GM12878 (cell line): ENCODE measurements at regions of chr9 and their contacts with region 1.

Region 1: GRCh38 chr9:19493174-19493811 is 84.5 kb downstream of the ACER2 start:
- DNase-seq: peak; percentile 11
- ATAC-seq: peak; percentile 87
- H3K4me3 ChIP-seq: no peak overlapping the region
- H3K27ac ChIP-seq: no peak overlapping the region
- H3K4me1 ChIP-seq: no peaks in the 10 kb centered on the region
- H3K27me3 ChIP-seq: no peaks in the 10 kb centered on the region; a peak in 2 of 4 replicates
- CTCF ChIP-seq: peak; percentile 74 to 85 (median 81)
- EP300 ChIP-seq: no peak
- POLR2A ChIP-seq: no peak
- RAD21 ChIP-seq: peak; percentile 74

Region 2: GRCh38 chr9:19642256-19642655 is 149.0 kb after region 1 on chr9:
- CTCF ChIA-PET with region 1: no interaction called
- POLR2A ChIA-PET with region 1: no interaction called
- RAD21 ChIA-PET with region 1: no interaction called
- SMC1A ChIA-PET with region 1: interaction called, 4 read pairs
- in situ Hi-C with region 1: no loop called
- intact Hi-C with region 1: loop called (anchors 1 kb)
- DNase-seq: no peak
- ATAC-seq: peak; percentile 43; the same call in 2 of the 3 replicates
- H3K4me3 ChIP-seq: no peak overlapping the region
- H3K27ac ChIP-seq: no peak overlapping the region
- H3K4me1 ChIP-seq: no peaks in the 10 kb centered on the region
- H3K27me3 ChIP-seq: no peaks in the 10 kb centered on the region
- CTCF ChIP-seq: no peak
- EP300 ChIP-seq: no peak
- POLR2A ChIP-seq: no peak
- RAD21 ChIP-seq: no peak

Region 3: GRCh38 chr9:19748278-19749126 is 255.2 kb after region 1 on chr9:
- CTCF ChIA-PET with region 1: no interaction called
- POLR2A ChIA-PET with region 1: no interaction called
- RAD21 ChIA-PET with region 1: no interaction called
- SMC1A ChIA-PET with region 1: no interaction called
- in situ Hi-C with region 1: no loop called
- intact Hi-C with region 1: loop called (anchors 10 kb)
- DNase-seq: no peak
- ATAC-seq: no peak
- H3K4me3 ChIP-seq: no peak overlapping the region
- H3K27ac ChIP-seq: no peak overlapping the region
- H3K4me1 ChIP-seq: no peaks in the 10 kb centered on the region
- H3K27me3 ChIP-seq: no peaks in the 10 kb centered on the region
- CTCF ChIP-seq: no peak
- EP300 ChIP-seq: no peak
- POLR2A ChIP-seq: no peak
- RAD21 ChIP-seq: no peak

Region 4: DNA sequence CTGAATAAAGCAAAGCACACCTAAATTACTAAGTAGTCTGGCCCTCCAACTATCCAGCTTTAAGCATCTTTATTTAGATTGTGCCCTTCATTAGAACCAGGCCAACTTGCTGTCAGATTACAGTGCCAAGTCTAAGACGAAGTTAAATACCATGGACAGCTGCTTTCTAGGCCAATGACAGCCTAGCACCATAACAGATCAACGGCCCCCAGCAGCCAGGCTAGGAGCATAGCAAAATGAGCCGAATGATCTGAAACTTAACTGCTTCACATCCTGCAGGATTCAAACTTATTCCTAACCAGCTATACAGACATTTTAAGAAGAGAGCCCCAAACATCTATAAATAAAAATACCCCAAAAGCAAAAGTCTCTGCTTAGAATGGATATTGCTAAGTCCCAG is 288.7 kb after region 1 on chr9:
- CTCF ChIA-PET with region 1: no interaction called
- POLR2A ChIA-PET with region 1: no interaction called
- RAD21 ChIA-PET with region 1: no interaction called
- SMC1A ChIA-PET with region 1: no interaction called
- in situ Hi-C with region 1: no loop called
- intact Hi-C with region 1: loop called (anchors 10 kb)
- DNase-seq: no peak
- ATAC-seq: no peak; the same call in 2 of the 3 replicates
- H3K4me3 ChIP-seq: no peak overlapping the region
- H3K27ac ChIP-seq: no peak overlapping the region
- H3K4me1 ChIP-seq: no peaks in the 10 kb centered on the region
- H3K27me3 ChIP-seq: no peaks in the 10 kb centered on the region
- CTCF ChIP-seq: no peak
- EP300 ChIP-seq: no peak
- POLR2A ChIP-seq: no peak
- RAD21 ChIP-seq: no peak

Region 5: GRCh38 chr9:19816769-19817168 is 323.5 kb after region 1 on chr9:
- CTCF ChIA-PET with region 1: no interaction called
- POLR2A ChIA-PET with region 1: no interaction called
- RAD21 ChIA-PET with region 1: no interaction called
- SMC1A ChIA-PET with region 1: no interaction called
- in situ Hi-C with region 1: no loop called
- intact Hi-C with region 1: no loop called
- DNase-seq: no peak
- ATAC-seq: no peak
- H3K4me3 ChIP-seq: no peak overlapping the region
- H3K27ac ChIP-seq: no peak overlapping the region
- H3K4me1 ChIP-seq: no peaks in the 10 kb centered on the region
- H3K27me3 ChIP-seq: no peaks in the 10 kb centered on the region
- CTCF ChIP-seq: no peak
- EP300 ChIP-seq: no peak
- POLR2A ChIP-seq: no peak
- RAD21 ChIP-seq: no peak

Region 6: DNA sequence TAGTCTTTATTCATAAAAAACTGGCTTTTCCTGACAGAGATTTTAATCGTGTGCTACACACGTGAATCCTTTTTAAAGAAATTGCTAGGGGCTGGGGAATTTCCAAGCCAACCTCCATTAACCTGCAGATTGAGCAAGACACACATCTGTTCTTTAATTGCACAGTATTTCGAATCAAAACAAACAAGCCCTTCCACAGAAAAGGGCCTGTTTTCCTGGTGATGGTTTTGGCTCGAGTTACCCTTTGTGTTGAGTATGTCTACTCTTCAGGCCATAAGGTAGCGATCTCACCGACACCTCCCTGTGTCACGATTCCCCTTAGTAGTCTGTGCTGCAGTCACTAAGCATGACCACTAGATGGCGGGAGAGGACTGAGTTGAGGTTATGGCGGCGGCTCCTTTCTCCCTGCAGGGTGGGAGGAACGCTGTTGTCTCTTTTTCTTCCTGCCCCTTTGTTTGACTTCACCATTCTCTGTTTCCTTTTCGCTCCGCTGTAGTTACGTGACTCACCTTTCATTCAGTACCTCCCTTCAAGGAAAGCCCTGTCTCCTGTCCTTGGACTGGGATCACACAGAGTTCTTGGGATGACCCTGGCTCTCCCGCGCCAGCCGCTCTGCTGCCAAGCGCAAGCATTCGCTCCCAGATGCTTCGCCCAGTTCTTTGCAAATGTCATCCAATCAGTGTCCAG is 432.7 kb after region 1 on chr9:
- CTCF ChIA-PET with region 1: no interaction called
- POLR2A ChIA-PET with region 1: no interaction called
- RAD21 ChIA-PET with region 1: no interaction called
- SMC1A ChIA-PET with region 1: no interaction called
- in situ Hi-C with region 1: no loop called
- intact Hi-C with region 1: loop called (anchors 5 kb)
- DNase-seq: peak; percentile 48
- ATAC-seq: peak; percentile 98
- H3K4me3 ChIP-seq: peak overlapping the region; percentile 56; the same call in 1 of the 2 replicates
- H3K27ac ChIP-seq: no peak overlapping the region
- H3K4me1 ChIP-seq: no peaks in the 10 kb centered on the region; the same call in 1 of the 2 replicates
- H3K27me3 ChIP-seq: no peaks in the 10 kb centered on the region; a peak in 2 of 4 replicates
- CTCF ChIP-seq: peak; percentile 94 to 97 (median 96)
- EP300 ChIP-seq: no peak
- POLR2A ChIP-seq: no peak
- RAD21 ChIP-seq: peak; percentile 98

Region 7: GRCh38 chr9:19976226-19976625 is 482.9 kb after region 1 on chr9:
- CTCF ChIA-PET with region 1: no interaction called
- POLR2A ChIA-PET with region 1: no interaction called
- RAD21 ChIA-PET with region 1: no interaction called
- SMC1A ChIA-PET with region 1: no interaction called
- in situ Hi-C with region 1: no loop called
- intact Hi-C with region 1: no loop called
- DNase-seq: no peak
- ATAC-seq: peak; percentile 40
- H3K4me3 ChIP-seq: no peak overlapping the region
- H3K27ac ChIP-seq: no peak overlapping the region
- H3K4me1 ChIP-seq: no peaks in the 10 kb centered on the region
- H3K27me3 ChIP-seq: no peaks in the 10 kb centered on the region
- CTCF ChIP-seq: no peak
- EP300 ChIP-seq: no peak
- POLR2A ChIP-seq: no peak
- RAD21 ChIP-seq: no peak